HCT116 (cell line): ENCODE measurements at regions of chr4 and their contacts with region 1.

Region 1: DNA sequence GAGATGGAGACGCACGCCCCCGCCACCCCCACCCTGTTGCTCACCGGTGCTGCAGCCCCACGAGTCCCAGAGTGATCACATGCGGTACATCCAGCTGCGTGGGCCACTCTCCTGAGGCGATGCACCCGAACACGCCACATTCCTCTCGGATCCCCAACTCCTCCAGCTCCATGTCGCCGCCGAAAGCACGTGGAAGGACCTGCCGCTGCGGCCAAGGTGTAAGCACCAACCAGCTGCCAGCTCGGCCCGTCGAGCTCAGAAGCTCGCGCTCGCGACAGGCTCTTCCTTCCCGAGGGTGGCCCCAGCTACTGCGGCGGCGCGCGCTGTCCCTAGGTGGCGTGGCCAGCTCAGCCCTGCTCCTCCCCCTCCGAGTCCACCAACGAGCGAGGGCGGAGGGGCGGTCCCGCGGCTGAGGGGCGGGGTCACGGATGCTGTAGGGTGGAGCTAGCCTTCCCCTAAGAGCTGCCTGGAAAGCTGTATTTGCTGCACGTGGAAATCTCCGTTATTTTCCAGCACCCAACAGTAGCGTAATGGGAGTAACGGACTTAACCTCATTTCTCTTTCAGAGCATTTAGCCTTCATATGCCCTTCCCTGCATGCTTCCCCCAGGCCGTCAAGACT is at the start of gene PPAT:
- DNase-seq: peak; percentile 94
- ATAC-seq: peak; percentile 84
- H3K4me3 ChIP-seq: peak within 1 kb of the TSS; percentile 70 to 91
- H3K27ac ChIP-seq: peak within 1 kb of the TSS; percentile 89
- H3K4me1 ChIP-seq: peaks cover 3 to 19% of the 10 kb centered on the region in 2 experiments; a peak in 3 of 4 replicates
- H3K27me3 ChIP-seq: no peaks in the 10 kb centered on the region
- CTCF ChIP-seq: peak in 1 of 3 experiments; percentile 18; a peak in 1 of 6 replicates
- POLR2A ChIP-seq: peak; percentile 65
- RAD21 ChIP-seq: no peak
- total RNA-seq, gene PPAT: 78.6 TPM

Region 2: GRCh38 chr4:56387023-56388001 is 48.1 kb before region 1 on chr4 and contains the start of gene AASDH:
- CTCF ChIA-PET with region 1: no interaction called
- POLR2A ChIA-PET with region 1: interaction called, 18 read pairs
- RAD21 ChIA-PET with region 1: interaction called in 1 of 2 experiments, 3 read pairs
- intact Hi-C with region 1: no loop called
- DNase-seq: peak; percentile 92
- ATAC-seq: peak; percentile 92
- H3K4me3 ChIP-seq: peak within 1 kb of the TSS; percentile 77 to 85
- H3K27ac ChIP-seq: peak within 1 kb of the TSS; percentile 86
- H3K4me1 ChIP-seq: peaks cover 7 to 15% of the 10 kb centered on the region in 2 experiments; a peak in 3 of 4 replicates
- H3K27me3 ChIP-seq: no peaks in the 10 kb centered on the region
- CTCF ChIP-seq: no peak
- POLR2A ChIP-seq: peak; percentile 97
- RAD21 ChIP-seq: no peak
- total RNA-seq, gene AASDH: 13.7 TPM

Region 3: DNA sequence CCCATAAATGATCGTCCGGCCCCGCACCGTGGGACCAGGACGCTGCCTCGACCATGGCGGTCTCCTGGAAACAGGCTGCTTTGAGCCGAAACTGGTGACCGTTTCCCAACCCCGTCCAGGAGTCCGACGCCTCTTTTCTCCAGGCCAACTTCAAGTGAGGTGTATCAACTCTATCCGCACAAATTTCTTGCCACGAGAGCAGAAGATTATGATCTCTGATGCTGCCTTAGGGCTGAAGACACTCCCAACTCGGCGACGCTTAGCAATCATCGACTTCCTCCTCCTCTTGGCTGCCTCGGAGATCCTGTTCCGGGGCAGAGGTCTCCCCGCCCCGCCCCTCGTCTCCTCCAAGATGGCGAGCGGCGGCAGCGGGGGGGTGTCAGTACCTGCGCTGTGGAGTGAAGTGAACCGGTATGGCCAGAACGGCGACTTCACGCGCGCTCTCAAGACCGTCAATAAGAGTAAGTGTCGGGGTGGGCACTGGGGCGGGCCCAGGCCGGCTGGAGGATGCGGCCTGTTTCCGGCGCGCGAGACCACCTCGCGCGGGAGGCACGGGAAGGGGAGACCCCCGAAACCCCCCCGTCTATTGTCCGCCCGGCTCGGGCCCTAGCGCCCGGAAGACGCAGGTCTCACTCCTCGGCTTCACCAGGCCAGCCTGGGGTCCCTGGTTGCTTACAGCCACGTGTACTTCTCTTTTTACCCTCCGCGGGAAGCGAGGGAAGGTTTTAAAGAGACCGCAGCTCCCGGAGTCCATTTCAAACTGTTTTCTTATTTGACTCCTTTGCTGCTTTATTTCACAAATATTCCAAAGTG is 32.1 kb after region 1 on chr4 and contains the start of gene SRP72:
- CTCF ChIA-PET with region 1: no interaction called
- POLR2A ChIA-PET with region 1: interaction called, 11 read pairs
- RAD21 ChIA-PET with region 1: no interaction called
- intact Hi-C with region 1: loop called (anchors 2 kb)
- DNase-seq: peak; percentile 66
- ATAC-seq: peak; percentile 85
- H3K4me3 ChIP-seq: peak within 1 kb of the TSS; percentile 88 to 91
- H3K27ac ChIP-seq: peak within 1 kb of the TSS; percentile 75
- H3K4me1 ChIP-seq: peaks cover 13 to 28% of the 10 kb centered on the region in 2 experiments
- H3K27me3 ChIP-seq: no peaks in the 10 kb centered on the region
- CTCF ChIP-seq: no peak
- POLR2A ChIP-seq: peak; percentile 65
- RAD21 ChIP-seq: no peak
- total RNA-seq, gene SRP72: 146 TPM

Region 4: GRCh38 chr4:56505269-56506130 is 70.1 kb after region 1 on chr4 and contains the start of gene ARL9:
- CTCF ChIA-PET with region 1: no interaction called
- POLR2A ChIA-PET with region 1: no interaction called
- RAD21 ChIA-PET with region 1: no interaction called
- intact Hi-C with region 1: no loop called
- DNase-seq: no peak
- ATAC-seq: no peak
- H3K4me3 ChIP-seq: no peak within 1 kb of the TSS
- H3K27ac ChIP-seq: no peak within 1 kb of the TSS
- H3K4me1 ChIP-seq: no peaks in the 10 kb centered on the region
- H3K27me3 ChIP-seq: no peaks in the 10 kb centered on the region
- CTCF ChIP-seq: no peak
- POLR2A ChIP-seq: no peak
- RAD21 ChIP-seq: no peak
- total RNA-seq, gene ARL9: not detected

Region 5: GRCh38 chr4:56907489-56908205 is 472.2 kb after region 1 on chr4 and contains the start of gene REST:
- CTCF ChIA-PET with region 1: no interaction called
- POLR2A ChIA-PET with region 1: no interaction called
- RAD21 ChIA-PET with region 1: no interaction called
- intact Hi-C with region 1: loop called (anchors 10 kb)
- DNase-seq: no peak
- ATAC-seq: peak; percentile 79
- H3K4me3 ChIP-seq: peak within 1 kb of the TSS; percentile 85 to 94
- H3K27ac ChIP-seq: peak within 1 kb of the TSS; percentile 77
- H3K4me1 ChIP-seq: peaks cover 8 to 14% of the 10 kb centered on the region in 2 experiments
- H3K27me3 ChIP-seq: no peaks in the 10 kb centered on the region
- CTCF ChIP-seq: no peak
- POLR2A ChIP-seq: no peak
- RAD21 ChIP-seq: no peak
- total RNA-seq, gene REST: 42.6 TPM